Naive thymus-derived CD8-positive, alpha-beta T cell (primary cell): ENCODE measurements at regions of chr11 and their contacts with region 1.

Region 1: DNA sequence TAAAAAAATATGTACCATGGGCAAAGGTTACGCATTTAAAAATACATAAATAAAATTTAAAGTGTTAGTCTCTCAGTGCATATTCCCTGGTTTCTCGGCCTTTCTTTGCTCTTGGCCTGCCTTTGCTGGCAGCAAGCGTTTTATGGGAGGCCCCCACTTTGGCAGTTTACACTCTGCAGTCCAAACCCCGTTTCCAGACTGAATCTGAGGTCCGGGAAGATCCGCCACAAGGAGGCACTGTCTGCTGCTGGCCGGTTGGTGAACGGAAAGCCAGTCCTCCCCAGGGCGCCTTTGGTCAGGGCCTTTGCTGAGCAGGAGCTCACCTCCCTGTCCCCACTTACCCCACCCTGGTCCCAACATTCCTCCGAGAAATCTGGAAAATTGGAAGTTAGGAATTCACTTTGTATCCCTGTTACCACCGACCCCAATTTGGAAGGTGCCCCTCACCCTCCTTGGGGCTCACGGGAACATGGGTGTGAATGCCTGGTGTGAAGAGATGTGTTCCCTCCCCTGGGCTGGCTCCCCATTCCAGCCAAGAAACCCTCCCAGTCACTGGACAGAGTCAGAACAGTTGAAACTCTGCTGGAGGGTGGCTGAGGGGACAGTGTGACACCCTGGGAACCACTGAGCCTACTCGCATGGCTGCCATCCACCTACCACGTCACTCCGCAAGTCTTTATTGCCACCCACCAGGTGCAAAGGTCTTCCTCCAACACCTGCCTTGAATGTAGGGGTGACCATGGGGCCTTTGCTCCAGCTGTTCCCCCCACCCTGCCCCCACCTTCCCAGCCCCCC is 9.4 kb upstream of the SF1 start:
- DNase-seq: peak in 9 of 10 donors; percentile 41 to 81 (median 54)
- ATAC-seq: peak; percentile 88 to 92
- H3K4me3 Mint-ChIP-seq: no peak overlapping the region
- H3K27ac Mint-ChIP-seq: peak overlapping the region in 8 of 10 donors; percentile 22 to 89 (median 81)
- H3K4me1 Mint-ChIP-seq: peaks cover 2 to 12% (median 9%) of the 10 kb centered on the region in 4 donors
- H3K27me3 Mint-ChIP-seq: no peaks in the 10 kb centered on the region

Region 2: DNA sequence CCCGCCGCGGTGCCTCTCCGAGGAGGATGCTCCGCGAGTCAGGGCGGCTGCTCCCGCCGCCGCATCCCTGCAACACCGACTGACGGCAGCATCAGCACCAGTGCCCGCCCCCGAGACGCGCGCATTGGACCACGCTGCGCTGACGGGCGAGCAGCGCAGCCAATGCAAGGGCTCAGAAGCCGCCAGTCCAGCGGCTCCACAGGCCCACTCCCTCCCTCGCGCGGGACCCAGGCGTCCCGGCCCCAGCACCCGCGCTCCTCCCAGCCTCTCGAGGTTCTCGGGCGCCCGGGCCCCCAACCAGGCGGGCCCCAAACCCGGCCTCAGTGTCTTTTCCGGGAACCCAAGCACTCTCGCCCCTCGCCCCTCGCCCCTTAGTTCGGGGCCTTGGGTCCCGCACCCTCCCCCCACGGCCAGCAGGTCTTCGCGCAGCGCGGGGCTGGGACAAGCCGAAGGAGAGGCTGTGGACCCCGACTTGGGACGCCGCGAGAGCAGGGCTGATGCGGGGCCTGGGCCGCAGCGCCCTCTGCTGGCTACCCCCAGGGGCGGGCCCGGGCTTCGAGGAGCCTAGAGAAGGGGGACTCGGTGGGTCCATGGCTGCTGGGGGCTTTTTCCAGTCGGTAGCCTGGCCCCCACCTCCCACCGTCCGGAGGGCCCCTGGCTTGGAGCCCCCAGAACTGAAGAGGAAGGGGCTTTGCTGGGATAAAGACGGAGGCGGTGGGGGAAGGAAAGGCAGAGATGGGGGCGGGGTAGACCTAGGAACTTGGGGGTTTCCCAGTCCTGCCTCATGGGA is 64.4 kb before region 1 on chr11 and contains the start of gene NRXN2:
- POLR2A ChIA-PET with region 1: no interaction called
- DNase-seq: peak; percentile 76 to 89 (median 82)
- ATAC-seq: peak; percentile 91 to 96
- H3K4me3 Mint-ChIP-seq: peak within 1 kb of the TSS; percentile 62 to 80 (median 70)
- H3K27ac Mint-ChIP-seq: peak within 1 kb of the TSS in 9 of 10 donors; percentile 13 to 80 (median 42)
- H3K4me1 Mint-ChIP-seq: peaks cover 22 to 24% (median 23%) of the 10 kb centered on the region in 4 donors
- H3K27me3 Mint-ChIP-seq: peaks cover 3 to 33% (median 23%) of the 10 kb centered on the region in 5 donors
- polyA plus RNA-seq, gene NRXN2: not detected

Region 3: GRCh38 chr11:64803163-64803845 is 15.6 kb after region 1 on chr11 and contains the start of gene MAP4K2:
- POLR2A ChIA-PET with region 1: interaction called, 73 read pairs
- DNase-seq: peak; percentile 72 to 95 (median 84)
- ATAC-seq: peak; percentile 86 to 89
- H3K4me3 Mint-ChIP-seq: peak within 1 kb of the TSS; percentile 81 to 91 (median 87)
- H3K27ac Mint-ChIP-seq: peak within 1 kb of the TSS; percentile 79 to 95 (median 92)
- H3K4me1 Mint-ChIP-seq: peaks cover 22 to 52% (median 46%) of the 10 kb centered on the region in 4 donors
- H3K27me3 Mint-ChIP-seq: no peaks in the 10 kb centered on the region
- polyA plus RNA-seq, gene MAP4K2: 26.6 to 55.5 (median 30.3) TPM